ENCODE measurements at regions of chr9 and their contacts with region 1.

Region 1: GRCh38 chr9:81312337-81312736 is 377.0 kb downstream of the TLE1 start:
- DNase-seq: no peak
- ATAC-seq: no peak
- H3K4me3 ChIP-seq: no peak overlapping the region
- H3K27ac ChIP-seq: no peak overlapping the region
- H3K4me1 ChIP-seq: peaks cover 4% of the 10 kb centered on the region; the same call in 1 of the 2 replicates
- H3K27me3 ChIP-seq: no peaks in the 10 kb centered on the region
- CTCF ChIP-seq: 0 out of 2 replicates have a peak, but pooled peaks have one; percentile 6
- EP300 ChIP-seq: no peak
- POLR2A ChIP-seq: no peak
- RAD21 ChIP-seq: no peak

Region 2: DNA sequence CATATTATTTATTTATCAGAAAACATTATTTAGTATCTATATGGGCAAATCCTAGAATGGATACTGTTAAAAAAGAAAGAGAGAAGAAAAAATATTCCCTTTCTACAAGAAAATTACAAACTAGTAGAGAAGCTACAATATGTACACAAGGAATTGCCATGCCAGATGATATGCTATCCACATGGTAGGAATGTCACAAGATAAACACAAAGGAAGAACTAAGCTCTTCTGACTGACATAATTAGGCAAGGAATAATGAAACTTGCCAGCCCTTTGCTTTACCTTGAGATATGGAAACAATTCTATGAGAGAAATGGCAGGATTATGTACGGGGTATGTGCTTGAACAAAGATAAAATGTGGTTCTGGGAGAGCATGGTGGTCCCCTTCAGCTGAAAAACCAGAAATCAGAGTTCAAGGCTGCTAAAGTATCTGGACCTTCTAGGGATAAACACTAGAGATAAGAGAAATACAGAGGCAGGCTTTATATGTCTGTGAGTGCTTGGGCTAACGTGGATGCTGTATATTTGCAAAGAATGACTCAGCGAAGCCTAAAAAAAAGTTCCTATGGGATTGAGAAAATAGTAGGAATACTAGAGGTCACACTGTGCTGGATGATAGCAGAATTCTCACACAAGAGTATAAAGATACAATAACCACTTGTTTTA is 74.6 kb before region 1 on chr9:
- CTCF ChIA-PET with region 1: no interaction called
- POLR2A ChIA-PET with region 1: no interaction called
- in situ Hi-C with region 1: no loop called
- intact Hi-C with region 1: loop called (anchors 5 kb)
- DNase-seq: peak; percentile 94
- ATAC-seq: peak; percentile 99
- H3K4me3 ChIP-seq: 0 out of 6 replicates have a peak overlapping the region, but pooled peaks of 1 of the 3 experiments have one; percentile 30
- H3K27ac ChIP-seq: peak overlapping the region; percentile 70
- H3K4me1 ChIP-seq: peaks cover 46% of the 10 kb centered on the region
- H3K27me3 ChIP-seq: no peaks in the 10 kb centered on the region
- CTCF ChIP-seq: no peak
- EP300 ChIP-seq: peak; percentile 61 to 83; a peak in 2 of 4 replicates
- POLR2A ChIP-seq: no peak
- RAD21 ChIP-seq: no peak

Measured in HepG2 (cell line).